CD14-positive monocyte (primary cell): ENCODE measurements at regions of chr22 and their contacts with region 1.

Region 1: GRCh38 chr22:21867528-21868266 is at the start of gene MAPK1:
- DNase-seq: peak; percentile 79 to 84 (median 82)
- H3K4me3 ChIP-seq: peak within 1 kb of the TSS; percentile 88 to 99 (median 90)
- H3K4me3 Mint-ChIP-seq: peak within 1 kb of the TSS; percentile 94 to 97
- H3K27ac ChIP-seq: peak within 1 kb of the TSS; percentile 83 to 86
- H3K27ac Mint-ChIP-seq: peak within 1 kb of the TSS; percentile 89 to 98 (median 95)
- H3K4me1 ChIP-seq: peaks cover 36 to 48% of the 10 kb centered on the region in 2 donors
- H3K4me1 Mint-ChIP-seq: peaks cover 44% of the 10 kb centered on the region
- H3K27me3 ChIP-seq: no peaks in the 10 kb centered on the region
- H3K27me3 Mint-ChIP-seq: peaks cover 0 to 2% (median 2%) of the 10 kb centered on the region in 3 donors
- CTCF ChIP-seq: peak; percentile 33
- polyA plus RNA-seq, gene MAPK1: 47.0 to 148 (median 118) TPM

Region 2: DNA sequence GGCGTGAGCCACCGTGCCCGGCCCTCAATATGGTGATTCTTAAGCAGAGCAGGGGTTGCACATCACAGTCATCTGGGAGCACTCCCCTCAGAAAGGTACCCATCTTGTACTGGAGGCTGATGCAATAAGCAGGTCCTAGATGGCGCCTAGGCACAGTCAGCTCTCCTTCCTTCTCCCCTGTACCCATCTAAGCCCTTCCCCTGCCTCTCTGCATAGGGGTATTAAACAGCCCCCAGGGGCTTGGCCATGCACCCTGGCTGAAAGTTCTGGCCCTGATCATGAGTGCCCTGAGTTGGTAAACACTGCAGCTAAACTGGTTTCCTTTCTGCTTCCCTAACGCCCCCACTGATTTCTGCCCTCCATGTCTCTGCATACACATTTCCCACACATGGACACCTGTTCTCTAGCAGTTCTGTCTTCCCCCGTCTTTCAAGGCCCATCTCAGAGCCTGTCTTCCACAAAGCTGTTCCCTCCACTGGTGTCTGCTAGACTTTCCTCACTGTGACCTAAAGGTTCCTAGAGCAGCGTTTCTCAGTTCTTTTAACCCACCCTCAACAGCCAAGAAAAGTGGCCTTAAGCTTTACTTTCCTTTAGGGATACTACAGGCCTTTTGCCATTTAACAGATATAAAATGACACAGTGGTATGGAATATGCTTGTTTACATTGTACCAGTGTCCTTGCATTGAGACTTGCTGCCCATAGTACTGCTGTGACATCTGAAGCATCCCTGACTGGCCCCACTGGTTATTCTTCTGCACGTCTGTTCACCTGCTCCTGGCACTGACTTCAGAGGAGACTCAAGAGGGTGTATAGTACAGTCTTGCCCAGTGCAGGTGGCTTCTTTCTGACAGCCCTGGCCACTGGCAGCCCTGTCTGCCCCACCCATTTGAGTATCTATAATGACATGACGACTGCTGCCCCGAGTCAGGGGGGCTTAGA is 284.6 kb before region 1 on chr22:
- intact Hi-C with region 1: no loop called
- DNase-seq: no peak
- H3K4me3 ChIP-seq: no peak overlapping the region
- H3K4me3 Mint-ChIP-seq: no peak overlapping the region
- H3K27ac ChIP-seq: no peak overlapping the region
- H3K27ac Mint-ChIP-seq: peak overlapping the region in 4 of 7 donors; percentile 46 to 62 (median 52)
- H3K4me1 ChIP-seq: peaks cover 10 to 12% of the 10 kb centered on the region in 2 donors
- H3K4me1 Mint-ChIP-seq: peaks cover 37% of the 10 kb centered on the region
- H3K27me3 ChIP-seq: no peaks in the 10 kb centered on the region
- H3K27me3 Mint-ChIP-seq: no peaks in the 10 kb centered on the region
- CTCF ChIP-seq: no peak

Region 3: GRCh38 chr22:21735200-21736076 is 132.3 kb before region 1 on chr22 and contains the start of gene YPEL1:
- intact Hi-C with region 1: loop called in 1 of 2 experiments (anchors 5 kb)
- DNase-seq: peak; percentile 94 to 96 (median 96)
- H3K4me3 ChIP-seq: peak within 1 kb of the TSS; percentile 37 to 76 (median 75)
- H3K4me3 Mint-ChIP-seq: peak within 1 kb of the TSS; percentile 91 to 95
- H3K27ac ChIP-seq: no peak within 1 kb of the TSS
- H3K27ac Mint-ChIP-seq: peak within 1 kb of the TSS in 5 of 7 donors; percentile 75 to 89 (median 83)
- H3K4me1 ChIP-seq: peaks cover 13 to 20% of the 10 kb centered on the region in 2 donors
- H3K4me1 Mint-ChIP-seq: peaks cover 15% of the 10 kb centered on the region
- H3K27me3 ChIP-seq: no peaks in the 10 kb centered on the region
- H3K27me3 Mint-ChIP-seq: peaks cover 2 to 12% (median 6%) of the 10 kb centered on the region in 3 donors
- CTCF ChIP-seq: no peak
- polyA plus RNA-seq, gene YPEL1: 1.0 to 2.3 (median 2.0) TPM

Region 4: DNA sequence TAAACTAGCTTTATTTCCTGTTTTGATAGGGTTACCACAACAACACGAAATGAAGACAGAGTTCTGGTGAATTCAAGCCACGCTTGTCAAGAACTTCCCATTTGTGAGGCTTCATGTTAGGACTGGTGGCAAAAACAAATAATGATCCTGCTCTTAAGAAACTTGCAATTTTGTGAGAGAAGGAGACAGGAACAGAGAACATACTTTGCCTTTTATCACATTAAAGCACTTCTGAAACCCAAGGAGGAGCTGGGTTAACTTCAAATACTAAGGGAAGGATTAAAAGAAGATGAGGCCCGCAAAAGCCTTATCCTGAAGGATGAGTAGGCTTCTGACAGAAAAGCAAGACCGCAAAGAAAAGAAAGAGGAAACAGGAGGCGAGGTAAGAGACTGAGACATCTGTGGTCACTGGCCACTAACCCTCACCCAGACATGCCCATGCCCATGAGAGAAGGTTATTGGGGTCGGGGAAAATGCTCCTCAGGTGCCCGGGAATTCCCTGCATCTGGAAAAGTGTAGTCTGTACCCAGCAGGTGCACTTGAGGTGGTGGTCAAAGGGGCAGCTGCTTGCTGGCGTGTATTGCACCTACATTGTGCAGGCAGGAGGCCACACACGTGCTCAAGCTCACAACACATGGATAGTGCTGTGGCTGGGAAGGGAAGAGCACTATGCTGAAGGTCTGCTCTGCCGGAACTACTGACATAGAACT is 50.8 kb before region 1 on chr22:
- intact Hi-C with region 1: loop called in 1 of 2 experiments (anchors 2 kb)
- DNase-seq: peak; percentile 91 to 98 (median 96)
- H3K4me3 ChIP-seq: peak overlapping the region; percentile 24 to 70 (median 33)
- H3K4me3 Mint-ChIP-seq: peak overlapping the region; percentile 75 to 82
- H3K27ac ChIP-seq: peak overlapping the region; percentile 98
- H3K27ac Mint-ChIP-seq: peak overlapping the region; percentile 94 to 100 (median 100)
- H3K4me1 ChIP-seq: peaks cover 55 to 59% of the 10 kb centered on the region in 2 donors
- H3K4me1 Mint-ChIP-seq: peaks cover 62% of the 10 kb centered on the region
- H3K27me3 ChIP-seq: no peaks in the 10 kb centered on the region
- H3K27me3 Mint-ChIP-seq: no peaks in the 10 kb centered on the region
- CTCF ChIP-seq: no peak